ENCODE measurements at regions of chr5 and their contacts with region 1.

Region 1: GRCh38 chr5:41924872-41925554 is at the start of gene FBXO4:
- DNase-seq: peak; percentile 77 to 92 (median 84)
- H3K4me3 ChIP-seq: peak within 1 kb of the TSS; percentile 89
- H3K27ac ChIP-seq: peak within 1 kb of the TSS; percentile 82 to 94
- H3K4me1 ChIP-seq: no peaks in the 10 kb centered on the region
- H3K27me3 ChIP-seq: no peaks in the 10 kb centered on the region
- CTCF ChIP-seq: peak in 2 of 3 donors; percentile 45 to 57
- EP300 ChIP-seq: no peak
- POLR2A ChIP-seq: peak; percentile 60
- total RNA-seq, gene FBXO4: 7.4 to 16.3 (median 8.7) TPM

Region 2: DNA sequence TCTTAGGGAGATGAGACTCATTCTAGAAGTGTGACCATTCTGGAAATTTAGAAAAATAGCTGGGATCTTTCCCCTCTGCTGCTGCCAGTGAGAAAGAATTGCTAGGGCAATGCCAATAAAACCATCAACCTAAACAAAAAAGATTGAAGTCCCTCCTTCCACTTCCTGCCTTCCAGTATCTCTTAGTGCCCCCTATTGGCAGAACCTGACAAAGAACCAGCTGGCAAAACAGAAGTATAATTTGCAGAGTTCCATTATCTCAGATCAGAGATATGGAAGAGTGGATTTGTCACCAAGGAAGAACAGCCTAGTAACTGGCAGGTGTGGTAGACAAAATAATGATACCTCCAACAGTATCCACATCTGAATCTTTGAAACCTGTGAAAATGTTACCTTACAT is 400.8 kb before region 1 on chr5:
- intact Hi-C with region 1: no loop called
- DNase-seq: no peak
- H3K4me3 ChIP-seq: no peak overlapping the region
- H3K27ac ChIP-seq: no peak overlapping the region
- H3K4me1 ChIP-seq: no peaks in the 10 kb centered on the region
- H3K27me3 ChIP-seq: no peaks in the 10 kb centered on the region
- CTCF ChIP-seq: no peak
- EP300 ChIP-seq: no peak
- POLR2A ChIP-seq: no peak

Region 3: GRCh38 chr5:41863871-41864486 is 61.0 kb before region 1 on chr5:
- intact Hi-C with region 1: loop called in 1 of 4 experiments (anchors 5 kb)
- DNase-seq: no peak
- H3K4me3 ChIP-seq: no peak overlapping the region
- H3K27ac ChIP-seq: no peak overlapping the region
- H3K4me1 ChIP-seq: peaks cover under 1% of the 10 kb centered on the region
- H3K27me3 ChIP-seq: no peaks in the 10 kb centered on the region
- CTCF ChIP-seq: no peak
- EP300 ChIP-seq: no peak
- POLR2A ChIP-seq: no peak

Region 4: DNA sequence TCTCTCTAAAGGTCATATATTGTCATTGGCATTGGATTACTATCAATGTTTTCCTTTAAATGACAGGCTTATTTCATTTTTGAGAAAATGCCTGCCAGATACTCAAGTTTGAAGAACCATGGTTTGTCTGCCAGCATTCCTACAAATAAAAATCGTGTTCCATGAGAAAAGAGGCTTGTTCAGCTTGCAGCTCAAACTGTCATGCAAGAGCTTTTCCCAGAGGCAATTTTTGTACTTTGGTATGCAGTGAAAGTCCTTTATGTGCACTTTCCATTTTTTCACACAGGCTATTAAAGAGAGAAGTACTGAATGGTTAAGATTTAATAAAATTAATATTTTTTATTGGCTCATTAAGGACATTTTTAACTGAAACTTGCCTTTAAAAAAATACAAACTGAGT is 110.5 kb after region 1 on chr5:
- intact Hi-C with region 1: no loop called
- DNase-seq: no peak
- H3K4me3 ChIP-seq: no peak overlapping the region
- H3K27ac ChIP-seq: no peak overlapping the region
- H3K4me1 ChIP-seq: no peaks in the 10 kb centered on the region
- H3K27me3 ChIP-seq: no peaks in the 10 kb centered on the region
- CTCF ChIP-seq: no peak
- EP300 ChIP-seq: no peak
- POLR2A ChIP-seq: no peak

Region 5: DNA sequence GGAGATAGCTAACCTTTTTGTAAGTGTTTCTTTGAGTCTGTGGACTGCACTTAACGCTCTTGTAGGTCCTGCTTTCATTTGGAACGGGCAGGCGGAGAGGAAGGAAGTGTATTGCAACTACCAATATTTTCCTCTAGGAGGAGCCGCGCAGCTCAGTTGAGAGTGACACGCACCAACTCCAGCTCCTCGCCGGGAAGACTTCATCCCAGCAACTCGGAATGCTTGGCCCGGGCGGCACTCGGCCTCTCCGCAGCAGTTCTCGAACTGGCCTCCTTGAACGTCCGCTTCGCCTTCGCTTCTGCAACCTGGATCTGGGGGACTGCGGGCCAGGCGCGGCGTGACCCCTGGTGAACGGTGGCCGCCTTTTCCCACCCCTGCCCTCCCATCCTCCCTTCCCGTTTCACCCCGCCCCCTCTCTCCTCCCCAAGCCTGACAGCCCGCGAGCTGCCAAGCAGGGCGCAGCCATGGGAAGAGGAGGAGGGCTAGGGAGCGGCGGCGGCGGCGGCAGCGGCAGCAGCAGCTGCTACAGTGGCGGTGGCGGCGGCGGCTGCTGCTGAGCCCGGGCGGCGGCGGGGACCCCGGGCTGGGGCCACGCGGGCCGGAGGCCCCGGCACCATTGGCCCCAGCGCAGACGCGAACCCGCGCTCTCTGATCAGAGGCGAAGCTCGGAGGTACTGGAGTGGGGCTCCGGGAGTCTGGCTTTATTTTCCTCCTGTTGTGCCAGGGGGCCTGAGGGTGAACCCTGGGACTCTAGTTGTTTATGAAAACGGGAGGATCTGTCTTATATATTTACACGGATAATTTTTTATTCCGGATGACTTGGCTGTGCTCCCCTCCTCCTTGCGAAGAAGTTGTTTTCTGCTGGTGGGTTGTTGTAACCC is 498.5 kb after region 1 on chr5 and contains the start of gene GHR:
- intact Hi-C with region 1: no loop called
- DNase-seq: peak; percentile 78 to 85 (median 82)
- H3K4me3 ChIP-seq: peak within 1 kb of the TSS; percentile 47
- H3K27ac ChIP-seq: peak within 1 kb of the TSS; percentile 33 to 81
- H3K4me1 ChIP-seq: peaks cover 2% of the 10 kb centered on the region
- H3K27me3 ChIP-seq: no peaks in the 10 kb centered on the region
- CTCF ChIP-seq: peak; percentile 67 to 77 (median 75)
- EP300 ChIP-seq: no peak
- POLR2A ChIP-seq: no peak
- total RNA-seq, gene GHR: 4.3 to 10.8 (median 7.0) TPM

Measured in ovary (tissue), 10 donors.